Posterior vena cava (tissue), 2 donors: ENCODE measurements at regions of chr15 and their contacts with region 1.

Region 1: GRCh38 chr15:40163657-40164416 is 3.0 kb downstream of the BUB1B start:
- DNase-seq: no peak

Region 2: DNA sequence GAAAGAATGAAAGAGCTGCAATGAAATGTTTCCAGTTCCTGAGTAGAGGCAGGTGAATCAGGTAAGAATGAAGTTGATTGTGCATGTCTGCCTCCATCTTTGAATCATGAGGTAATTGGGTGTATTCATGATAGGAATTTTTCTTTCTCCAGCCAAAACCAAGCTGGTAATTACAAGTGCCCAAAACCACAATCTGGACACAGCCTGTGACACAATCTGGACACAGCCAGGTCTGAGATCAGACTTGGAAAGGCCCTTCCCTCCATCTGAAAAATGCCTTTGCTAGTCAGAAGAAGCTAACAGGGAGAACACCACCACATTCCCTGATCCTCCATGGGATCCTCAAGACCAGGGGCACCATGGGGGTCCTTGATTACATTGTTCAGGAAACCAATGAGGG is 921.5 kb before region 1 on chr15:
- intact Hi-C with region 1: no loop called
- DNase-seq: no peak

Region 3: GRCh38 chr15:40150163-40150925 is 13.5 kb before region 1 on chr15:
- intact Hi-C with region 1: loop called in 1 of 2 experiments (anchors 1 kb)
- DNase-seq: no peak

Region 4: GRCh38 chr15:40430271-40430805 is 266.5 kb after region 1 on chr15:
- intact Hi-C with region 1: no loop called
- DNase-seq: no peak